ENCODE measurements at regions of chr6 and their contacts with region 1.

Region 1: GRCh38 chr6:13795041-13795750 is 19.2 kb downstream of the MCUR1 start:
- DNase-seq: peak; percentile 77 to 94 (median 83)
- H3K4me3 ChIP-seq: no peak overlapping the region
- H3K27ac ChIP-seq: no peak overlapping the region
- H3K4me1 ChIP-seq: no peaks in the 10 kb centered on the region
- H3K27me3 ChIP-seq: no peaks in the 10 kb centered on the region
- CTCF ChIP-seq: peak; percentile 76 to 94 (median 86)
- POLR2A ChIP-seq: no peak

Region 2: GRCh38 chr6:13908955-13909381 is 113.8 kb after region 1 on chr6:
- intact Hi-C with region 1: loop called in 1 of 2 experiments (anchors 10 kb)
- DNase-seq: peak; percentile 49 to 68 (median 62)
- H3K4me3 ChIP-seq: no peak overlapping the region
- H3K27ac ChIP-seq: no peak overlapping the region
- H3K4me1 ChIP-seq: no peaks in the 10 kb centered on the region
- H3K27me3 ChIP-seq: no peaks in the 10 kb centered on the region
- CTCF ChIP-seq: peak; percentile 59 to 86 (median 82)
- POLR2A ChIP-seq: no peak

Region 3: DNA sequence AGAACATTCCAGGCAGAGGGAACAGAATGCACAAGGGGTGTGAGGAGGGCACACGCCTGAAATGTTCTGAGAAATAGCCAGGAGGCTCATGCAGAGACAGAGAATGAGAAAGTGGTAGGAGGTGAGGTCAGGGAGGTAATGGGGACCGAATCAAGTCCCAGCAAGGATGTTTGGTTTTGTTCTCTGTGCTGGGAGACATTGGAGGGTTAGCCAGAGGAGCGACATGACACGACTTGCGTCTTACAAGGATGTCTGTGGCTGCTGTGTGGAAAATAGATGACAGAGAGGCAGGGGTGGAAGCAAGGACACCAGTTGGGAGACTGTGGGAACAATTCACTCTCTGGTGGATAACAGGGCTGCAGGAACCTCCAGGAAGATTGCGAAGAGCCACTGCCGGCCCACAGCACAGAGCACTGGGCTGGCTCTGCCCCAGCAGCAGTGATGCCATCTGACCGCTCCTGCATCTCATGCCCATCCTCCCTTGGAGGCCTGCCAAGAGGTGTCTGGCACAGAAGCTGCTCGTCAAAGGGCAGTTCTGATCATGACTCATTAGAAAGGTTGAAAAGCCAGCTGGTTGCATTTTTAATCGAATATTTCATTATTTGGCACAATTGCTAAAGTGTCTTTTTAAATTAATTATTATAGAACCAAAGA is 264.7 kb after region 1 on chr6:
- intact Hi-C with region 1: loop called (anchors 10 kb)
- DNase-seq: peak; percentile 70 to 89 (median 84)
- H3K4me3 ChIP-seq: no peak overlapping the region
- H3K27ac ChIP-seq: no peak overlapping the region
- H3K4me1 ChIP-seq: no peaks in the 10 kb centered on the region
- H3K27me3 ChIP-seq: peaks cover 8% of the 10 kb centered on the region
- CTCF ChIP-seq: no peak
- POLR2A ChIP-seq: no peak

Measured in adrenal gland (tissue), 19 donors.